A549 (cell line): ENCODE measurements at regions of chr19 and their contacts with region 1.

Region 1: GRCh38 chr19:11482384-11483050 is 1.7 kb upstream of the ELAVL3 start:
- DNase-seq: peak; percentile 75 to 84
- ATAC-seq: peak; percentile 69 to 86
- H3K4me3 ChIP-seq: peak overlapping the region; percentile 64
- H3K27ac ChIP-seq: peak overlapping the region; percentile 81 to 91
- H3K4me1 ChIP-seq: 0 out of 3 replicates have a peak, but pooled peaks cover 3% of the 10 kb centered on the region
- CTCF ChIP-seq: peak; percentile 84
- EP300 ChIP-seq: no peak
- POLR2A ChIP-seq: no peak
- RAD21 ChIP-seq: peak; percentile 64 to 87; a peak in 4 of 5 replicates

Region 2: GRCh38 chr19:11306334-11306733 is 176.2 kb before region 1 on chr19:
- CTCF ChIA-PET with region 1: no interaction called
- POLR2A ChIA-PET with region 1: no interaction called
- DNase-seq: no peak
- ATAC-seq: no peak
- H3K4me3 ChIP-seq: no peak overlapping the region
- H3K27ac ChIP-seq: no peak overlapping the region
- H3K4me1 ChIP-seq: no peaks in the 10 kb centered on the region
- CTCF ChIP-seq: no peak
- EP300 ChIP-seq: no peak
- POLR2A ChIP-seq: no peak
- RAD21 ChIP-seq: no peak

Region 3: DNA sequence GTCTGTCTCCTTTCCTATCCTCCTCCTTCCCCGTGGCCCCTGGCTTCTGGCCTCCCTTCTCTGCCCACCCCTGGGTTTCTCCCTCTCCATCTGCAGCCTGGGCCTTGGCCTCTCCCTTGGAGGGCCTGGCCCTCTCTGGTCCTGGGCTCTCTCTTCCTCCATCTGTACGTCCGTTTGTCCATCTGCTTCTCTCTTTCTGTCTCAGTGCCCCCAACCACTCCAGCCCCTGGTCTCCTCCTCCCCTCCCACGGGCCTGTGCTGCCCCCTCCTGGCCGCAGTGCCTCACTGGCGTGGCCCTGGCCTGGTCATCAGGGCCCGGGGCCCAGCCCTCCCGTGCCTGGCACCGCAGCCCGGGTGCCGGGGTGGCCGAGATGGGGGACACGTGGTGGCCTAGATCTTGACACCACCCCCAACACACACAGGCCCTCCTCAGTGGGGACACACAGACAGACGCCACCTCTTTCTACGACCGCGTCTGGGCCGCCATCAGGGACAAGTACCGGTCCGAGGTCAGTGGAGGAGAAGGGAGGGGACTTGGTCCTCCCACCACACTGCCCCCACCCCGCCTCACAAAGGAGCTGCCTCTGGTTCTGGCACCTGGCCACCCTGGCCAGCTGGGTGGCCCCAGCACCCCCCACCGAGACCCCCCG is 35.7 kb before region 1 on chr19:
- CTCF ChIA-PET with region 1: interaction called, 10 read pairs
- POLR2A ChIA-PET with region 1: no interaction called
- DNase-seq: peak; percentile 40 to 70
- ATAC-seq: peak; percentile 83 to 93; a peak in 5 of 6 replicates
- H3K4me3 ChIP-seq: no peak overlapping the region
- H3K27ac ChIP-seq: no peak overlapping the region
- H3K4me1 ChIP-seq: no peaks in the 10 kb centered on the region
- CTCF ChIP-seq: peak; percentile 62
- EP300 ChIP-seq: no peak
- POLR2A ChIP-seq: no peak
- RAD21 ChIP-seq: peak; percentile 76 to 77

Region 4: GRCh38 chr19:11451868-11452619 is 30.5 kb before region 1 on chr19:
- CTCF ChIA-PET with region 1: interaction called, 10 read pairs
- POLR2A ChIA-PET with region 1: no interaction called
- DNase-seq: no peak
- ATAC-seq: no peak
- H3K4me3 ChIP-seq: no peak overlapping the region
- H3K27ac ChIP-seq: no peak overlapping the region
- H3K4me1 ChIP-seq: no peaks in the 10 kb centered on the region
- CTCF ChIP-seq: no peak
- EP300 ChIP-seq: no peak
- POLR2A ChIP-seq: no peak
- RAD21 ChIP-seq: no peak

Region 5: DNA sequence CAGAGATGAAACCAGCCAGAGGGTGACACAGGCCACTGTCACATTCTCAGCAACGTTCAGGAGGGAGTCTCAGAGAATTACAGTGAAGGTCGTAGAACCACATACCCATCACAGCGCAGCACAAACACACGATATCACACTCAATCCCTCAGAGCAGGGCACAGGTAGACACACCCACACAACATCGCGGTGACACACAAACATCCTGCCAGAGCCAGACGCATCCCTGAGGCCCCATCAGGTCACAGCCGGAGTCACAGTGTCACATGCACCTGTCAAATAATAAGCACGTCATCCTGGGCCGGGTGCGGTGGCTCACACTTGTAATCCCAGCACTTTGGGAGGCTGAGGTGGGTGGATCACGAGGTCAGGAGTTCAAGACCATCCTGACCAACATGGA is 19.1 kb before region 1 on chr19:
- CTCF ChIA-PET with region 1: interaction called, 14 read pairs
- POLR2A ChIA-PET with region 1: no interaction called
- DNase-seq: no peak
- ATAC-seq: no peak
- H3K4me3 ChIP-seq: no peak overlapping the region
- H3K27ac ChIP-seq: no peak overlapping the region
- H3K4me1 ChIP-seq: no peaks in the 10 kb centered on the region
- CTCF ChIP-seq: no peak
- EP300 ChIP-seq: no peak
- POLR2A ChIP-seq: no peak
- RAD21 ChIP-seq: no peak

Region 6: DNA sequence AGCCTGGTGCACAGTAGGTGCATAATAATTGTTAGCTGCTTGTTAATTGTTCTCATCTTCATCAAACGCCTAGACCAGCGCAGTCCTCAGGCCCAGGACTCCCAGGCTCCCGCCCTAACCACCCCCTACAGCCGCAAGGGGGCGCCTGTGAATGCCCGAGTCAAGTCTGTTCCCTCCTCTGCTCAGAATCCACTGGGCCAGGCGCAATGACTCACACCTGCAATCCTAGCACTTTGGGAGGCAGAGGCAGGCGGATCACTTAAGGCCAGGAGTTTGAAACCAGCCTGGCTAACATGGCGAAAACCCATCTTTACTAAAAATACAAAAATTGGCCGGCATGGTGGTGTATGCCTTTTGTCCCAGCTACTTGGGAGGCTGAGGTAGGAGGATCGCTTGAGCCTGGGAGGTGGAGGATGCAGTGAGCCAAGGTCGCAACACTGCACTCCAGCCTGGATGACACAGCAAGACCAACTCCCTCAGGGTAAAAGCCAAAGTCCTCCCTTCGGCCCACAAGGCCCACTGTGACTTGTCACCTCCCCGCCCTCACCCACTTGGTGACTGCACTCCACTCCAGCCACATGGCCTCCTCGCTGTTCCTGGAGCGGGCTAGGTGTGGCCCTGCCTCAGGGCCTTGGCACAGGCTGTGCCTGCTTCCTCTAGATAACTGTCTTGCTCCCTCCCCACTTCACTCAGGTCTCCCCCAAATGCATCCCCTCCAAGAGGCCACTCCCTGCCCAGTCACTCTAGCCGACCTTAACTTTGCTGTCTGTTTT is 14.1 kb after region 1 on chr19:
- CTCF ChIA-PET with region 1: interaction called, 26 read pairs
- POLR2A ChIA-PET with region 1: no interaction called
- DNase-seq: peak; percentile 55 to 84
- ATAC-seq: peak; percentile 91 to 98
- H3K4me3 ChIP-seq: no peak overlapping the region
- H3K27ac ChIP-seq: peak overlapping the region in 1 of 2 experiments; percentile 58; a peak in 3 of 6 replicates
- H3K4me1 ChIP-seq: peaks cover 4% of the 10 kb centered on the region
- CTCF ChIP-seq: peak; percentile 56
- EP300 ChIP-seq: no peak
- POLR2A ChIP-seq: no peak
- RAD21 ChIP-seq: peak; percentile 50 to 56

Region 7: DNA sequence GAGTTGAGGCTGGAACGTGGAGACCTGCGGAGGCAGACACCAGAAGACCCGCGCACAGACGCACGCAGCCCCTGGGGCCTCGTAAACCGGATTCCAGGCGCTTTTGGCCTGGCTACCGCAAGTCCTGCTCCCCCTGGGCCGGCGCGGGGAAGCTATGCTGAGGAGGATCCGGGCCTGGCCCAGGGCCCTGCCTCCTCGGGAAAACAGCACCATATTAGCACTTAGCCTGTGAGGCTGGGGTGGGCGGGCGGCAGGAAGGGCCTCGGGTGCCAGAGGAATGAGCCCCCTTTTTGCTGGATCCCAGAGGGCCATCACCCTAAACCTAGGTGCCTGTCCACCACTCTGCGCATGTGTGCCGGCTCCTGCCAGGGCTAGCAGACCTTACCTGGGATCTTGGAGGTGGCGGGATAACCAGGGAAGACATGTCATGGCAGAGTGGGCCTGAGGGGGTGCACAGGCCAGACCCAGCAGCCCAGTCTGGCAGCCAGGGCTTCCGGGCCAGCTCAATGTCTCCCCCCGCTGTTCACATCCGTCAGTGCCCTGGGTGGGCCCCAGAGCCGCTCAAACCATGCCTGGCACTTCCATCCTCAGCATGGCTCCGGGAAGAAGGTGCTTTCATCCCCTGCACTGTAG is 69.2 kb after region 1 on chr19:
- CTCF ChIA-PET with region 1: no interaction called
- POLR2A ChIA-PET with region 1: no interaction called
- DNase-seq: no peak
- ATAC-seq: peak; percentile 61 to 87; a peak in 4 of 6 replicates
- H3K4me3 ChIP-seq: no peak overlapping the region
- H3K27ac ChIP-seq: no peak overlapping the region
- H3K4me1 ChIP-seq: no peaks in the 10 kb centered on the region
- CTCF ChIP-seq: peak; percentile 22; the same call in 2 of the 3 replicates
- EP300 ChIP-seq: no peak
- POLR2A ChIP-seq: no peak
- RAD21 ChIP-seq: peak; percentile 24 to 25; a peak in 2 of 5 replicates

Region 8: DNA sequence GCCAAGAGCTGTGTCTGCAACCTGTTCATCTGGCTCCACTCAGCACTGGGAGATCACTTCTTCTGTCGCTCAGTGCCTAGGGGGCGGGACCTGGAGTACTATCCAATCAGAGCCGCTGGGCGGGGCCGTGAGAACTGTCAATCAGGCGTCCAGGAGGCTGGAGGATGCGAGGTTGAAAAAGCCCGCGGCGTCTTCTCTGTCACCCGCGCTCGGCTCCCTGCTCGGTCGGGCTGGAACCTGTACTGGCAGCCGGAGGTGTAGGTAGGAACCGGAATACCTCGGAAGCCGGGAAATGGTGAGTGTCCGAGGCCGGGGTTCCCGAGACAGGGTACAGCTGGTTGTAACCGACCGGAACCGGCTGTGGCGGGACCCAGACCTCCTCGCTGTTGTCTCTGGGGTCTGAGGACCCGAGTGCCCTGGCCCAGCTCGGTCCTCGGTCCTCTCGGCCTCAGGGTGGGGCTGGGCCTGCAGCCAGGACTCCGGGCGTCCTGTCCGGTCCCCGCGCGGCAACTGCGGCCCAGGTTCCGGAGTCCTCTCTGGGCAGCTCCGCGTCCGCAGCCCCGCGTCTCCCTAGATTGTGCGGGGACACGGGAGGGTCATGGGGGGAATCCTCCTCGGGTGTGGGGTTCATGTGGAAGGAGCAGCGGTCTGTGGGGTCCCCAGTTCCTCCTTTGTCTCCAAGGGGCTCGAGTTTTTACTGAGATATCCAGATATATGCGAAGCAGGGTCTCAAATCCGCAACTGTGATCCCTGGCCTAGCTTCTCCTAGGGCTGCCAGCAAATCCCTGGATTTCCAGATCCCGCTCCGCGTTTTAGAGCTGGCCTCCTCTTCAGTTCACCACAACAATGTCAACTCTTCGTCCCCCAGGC is 157.3 kb after region 1 on chr19:
- CTCF ChIA-PET with region 1: no interaction called
- POLR2A ChIA-PET with region 1: no interaction called
- DNase-seq: peak; percentile 84 to 87
- ATAC-seq: peak; percentile 99
- H3K4me3 ChIP-seq: peak overlapping the region; percentile 64
- H3K27ac ChIP-seq: peak overlapping the region; percentile 53 to 82
- H3K4me1 ChIP-seq: no peaks in the 10 kb centered on the region
- CTCF ChIP-seq: no peak
- EP300 ChIP-seq: no peak
- POLR2A ChIP-seq: no peak
- RAD21 ChIP-seq: no peak